BJ (cell line): ENCODE measurements at regions of chr6 and their contacts with region 1.

Region 1: GRCh38 chr6:158605266-158605878 is 39.2 kb downstream of the DYNLT1 start:
- DNase-seq: peak; percentile 22
- H3K4me3 ChIP-seq: no peak overlapping the region
- H3K27me3 ChIP-seq: no peaks in the 10 kb centered on the region
- CTCF ChIP-seq: peak; percentile 78

Region 2: GRCh38 chr6:158213925-158214674 is 391.3 kb before region 1 on chr6:
- CTCF ChIA-PET with region 1: interaction called, 185 read pairs
- POLR2A ChIA-PET with region 1: no interaction called
- DNase-seq: no peak
- H3K4me3 ChIP-seq: no peak overlapping the region
- H3K27me3 ChIP-seq: no peaks in the 10 kb centered on the region
- CTCF ChIP-seq: peak; percentile 75

Region 3: DNA sequence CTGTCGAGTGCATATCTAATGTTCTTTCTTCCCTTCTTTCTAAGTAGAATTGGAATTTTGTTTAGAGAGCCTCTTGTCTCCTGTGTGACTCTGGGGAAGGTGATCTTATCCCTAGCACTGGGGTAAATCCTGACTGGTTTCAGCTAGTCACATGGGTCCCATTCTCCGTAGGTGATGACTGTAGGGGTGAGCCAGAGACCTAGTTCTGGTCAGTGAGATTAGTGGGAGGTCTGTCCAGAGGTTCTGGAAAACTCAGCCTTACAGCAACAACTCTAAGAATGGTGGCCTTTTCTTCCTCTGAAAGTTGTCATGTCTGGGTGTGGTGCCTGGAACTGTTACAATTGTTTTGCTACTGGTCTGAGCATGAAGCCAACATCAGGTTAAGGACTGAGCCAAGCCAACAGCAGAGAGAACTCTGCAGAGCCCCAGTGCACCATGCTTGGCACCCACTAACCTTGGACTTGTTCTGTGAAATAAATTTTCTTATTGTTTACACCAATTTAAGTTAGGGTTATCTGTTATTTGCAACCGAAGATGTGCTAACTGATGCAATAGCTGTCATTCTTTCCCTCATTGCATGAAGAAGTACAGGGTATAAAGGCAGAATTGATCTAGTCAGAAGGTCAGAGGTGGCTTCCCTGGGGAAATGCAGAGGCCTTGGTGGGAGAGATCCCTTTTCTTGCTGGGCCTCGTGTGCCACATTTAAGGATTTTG is 349.9 kb before region 1 on chr6:
- CTCF ChIA-PET with region 1: no interaction called
- POLR2A ChIA-PET with region 1: no interaction called
- DNase-seq: no peak
- H3K4me3 ChIP-seq: no peak overlapping the region
- H3K27me3 ChIP-seq: no peaks in the 10 kb centered on the region
- CTCF ChIP-seq: no peak

Region 4: DNA sequence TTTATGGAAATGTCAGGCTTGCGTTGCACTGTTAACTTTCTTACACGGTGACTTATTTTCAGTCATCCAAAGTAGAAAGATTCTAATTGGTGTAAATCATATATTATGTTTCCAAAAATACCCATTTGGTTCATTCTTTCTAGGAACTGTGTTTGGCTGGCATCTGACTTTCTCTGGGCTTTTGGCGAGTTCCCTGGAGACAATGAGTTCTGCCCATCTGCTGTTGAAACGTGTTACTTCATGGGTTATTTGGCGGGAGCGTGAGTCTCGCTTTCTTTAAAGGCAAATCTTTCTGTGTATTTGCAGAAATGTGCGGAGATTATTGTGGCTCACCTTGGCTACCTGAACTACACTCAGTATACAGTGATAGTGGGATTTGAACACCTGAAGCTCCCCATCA is 16.0 kb before region 1 on chr6:
- CTCF ChIA-PET with region 1: interaction called, 11 read pairs
- POLR2A ChIA-PET with region 1: no interaction called
- DNase-seq: no peak
- H3K4me3 ChIP-seq: no peak overlapping the region
- H3K27me3 ChIP-seq: no peaks in the 10 kb centered on the region
- CTCF ChIP-seq: no peak

Region 5: GRCh38 chr6:158595223-158595622 is 10.1 kb before region 1 on chr6:
- CTCF ChIA-PET with region 1: interaction called, 11 read pairs
- POLR2A ChIA-PET with region 1: no interaction called
- DNase-seq: no peak
- H3K4me3 ChIP-seq: no peak overlapping the region
- H3K27me3 ChIP-seq: no peaks in the 10 kb centered on the region
- CTCF ChIP-seq: peak; percentile 30; the same call in 1 of the 2 replicates